MCF 10A (cell line): ENCODE measurements at regions of chr11 and their contacts with region 1.

Region 1: DNA sequence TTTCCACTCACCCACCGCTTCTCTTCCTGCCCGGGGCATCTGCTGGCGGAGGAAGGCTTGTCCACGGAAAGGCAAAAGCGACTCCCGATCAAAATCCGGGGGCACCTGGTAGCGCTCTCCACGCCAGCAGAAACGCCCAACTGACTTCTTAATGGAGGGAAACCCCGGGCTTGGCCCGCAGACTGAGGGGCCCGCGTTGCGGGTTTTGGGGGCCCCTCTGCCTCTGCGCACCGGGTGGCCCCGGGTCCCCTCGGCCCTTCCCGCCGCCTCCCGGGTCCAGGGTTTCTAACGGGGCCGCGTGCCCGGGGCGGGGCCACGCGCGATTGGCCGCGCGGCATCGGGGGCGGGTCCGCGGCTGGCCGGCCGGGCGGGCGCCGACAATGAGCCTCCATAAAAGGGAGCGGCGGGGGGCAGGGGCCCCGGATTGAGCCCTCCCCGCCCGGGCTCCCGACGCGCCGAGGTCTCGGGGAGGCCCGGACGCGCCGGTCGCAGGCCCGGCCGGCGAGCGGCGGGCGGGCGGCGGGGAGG is at the start of gene SPINDOC:
- DNase-seq: peak; percentile 68
- H3K4me3 Mint-ChIP-seq: peak within 1 kb of the TSS; percentile 75
- H3K27ac Mint-ChIP-seq: no peak within 1 kb of the TSS
- H3K4me1 Mint-ChIP-seq: peaks cover 26% of the 10 kb centered on the region
- H3K27me3 Mint-ChIP-seq: no peaks in the 10 kb centered on the region
- CTCF ChIP-seq: no peak
- total RNA-seq, gene SPINDOC: 17.1 and 21.4 TPM in 2 replicates

Region 2: DNA sequence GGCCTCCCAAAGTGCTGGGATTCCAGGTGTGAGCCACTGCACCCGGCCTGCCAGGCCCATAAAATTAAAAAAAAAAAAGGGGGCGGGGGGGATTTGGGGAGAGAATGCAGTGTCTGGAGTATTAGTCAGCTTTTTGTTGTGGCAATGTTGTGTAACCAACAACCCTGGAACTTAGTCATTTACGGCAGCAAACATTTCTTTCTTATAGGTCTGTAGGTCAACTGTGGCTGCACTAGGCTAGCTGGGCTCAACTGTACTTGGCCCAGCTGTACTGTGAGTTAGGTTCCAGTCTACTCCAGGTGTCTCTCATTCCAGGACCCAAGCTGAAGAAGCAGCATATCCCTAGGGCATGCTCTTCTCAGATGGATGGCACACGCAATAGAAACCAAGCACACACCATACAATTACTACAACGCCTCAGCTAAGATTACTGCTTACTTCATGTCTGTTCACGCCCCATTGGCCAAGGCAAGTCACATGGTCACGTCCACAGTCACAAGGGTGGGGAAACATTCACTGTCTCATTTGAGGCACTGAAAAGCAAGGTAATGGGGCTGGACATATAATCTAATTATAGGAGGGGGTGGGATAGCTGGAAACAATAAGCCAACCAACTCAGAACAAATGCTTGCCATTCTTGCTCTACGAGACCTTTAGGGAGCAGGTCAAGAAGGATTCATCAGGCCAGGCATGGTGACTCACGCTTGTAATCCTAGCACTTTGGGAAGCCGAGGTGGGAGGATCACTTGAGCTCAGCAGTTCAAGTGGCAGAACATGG is 10.3 kb before region 1 on chr11:
- CTCF ChIA-PET with region 1: no interaction called
- POLR2A ChIA-PET with region 1: interaction called, 16 read pairs
- intact Hi-C with region 1: no loop called
- DNase-seq: peak; percentile 90
- H3K4me3 Mint-ChIP-seq: peak overlapping the region; percentile 67
- H3K27ac Mint-ChIP-seq: peak overlapping the region; percentile 85
- H3K4me1 Mint-ChIP-seq: peaks cover 9% of the 10 kb centered on the region
- H3K27me3 Mint-ChIP-seq: no peaks in the 10 kb centered on the region
- CTCF ChIP-seq: no peak